ENCODE measurements at regions of chr10 and their contacts with region 1.

Region 1: DNA sequence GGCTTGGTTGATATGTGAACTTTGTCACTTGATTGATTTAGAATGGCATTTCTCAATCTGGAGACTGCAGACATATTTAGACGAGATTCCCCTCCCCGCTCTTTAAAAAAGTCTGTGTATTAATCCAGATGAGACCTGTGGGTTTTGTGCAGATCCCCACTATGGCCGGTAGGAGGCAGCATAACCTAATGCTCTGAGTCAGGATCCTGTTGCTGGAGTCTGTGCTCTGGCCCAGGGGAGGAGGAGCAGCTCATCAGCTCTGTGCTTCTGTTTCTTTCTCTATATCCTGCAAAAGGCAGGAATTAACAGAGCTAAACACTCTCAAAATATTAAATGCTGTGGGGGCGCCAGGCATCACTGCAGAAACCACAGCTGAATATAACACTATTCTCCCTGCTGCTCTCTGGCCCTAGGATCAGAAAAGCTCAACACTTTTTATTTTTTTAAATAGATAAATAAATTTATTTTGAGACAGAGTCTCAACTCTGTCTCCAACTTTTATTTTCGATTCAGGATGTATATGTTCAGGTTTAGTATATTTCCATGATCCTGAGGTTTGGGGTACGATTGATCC is 23.9 kb upstream of the SEPHS1 start:
- DNase-seq: peak; percentile 73
- H3K4me3 ChIP-seq: no peak overlapping the region
- H3K27ac ChIP-seq: no peak overlapping the region
- H3K4me1 ChIP-seq: no peaks in the 10 kb centered on the region
- H3K27me3 ChIP-seq: no peaks in the 10 kb centered on the region
- CTCF ChIP-seq: peak; percentile 88 to 94 (median 92)
- EP300 ChIP-seq: no peak
- POLR2A ChIP-seq: no peak

Region 2: GRCh38 chr10:11483201-11484148 is 1888.5 kb before region 1 on chr10:
- in situ Hi-C with region 1: no loop called
- intact Hi-C with region 1: no loop called
- DNase-seq: no peak
- H3K4me3 ChIP-seq: no peak overlapping the region
- H3K27ac ChIP-seq: peak overlapping the region in 1 of 4 donors; percentile 16
- H3K4me1 ChIP-seq: no peaks in the 10 kb centered on the region
- H3K27me3 ChIP-seq: no peaks in the 10 kb centered on the region
- CTCF ChIP-seq: no peak
- EP300 ChIP-seq: no peak
- POLR2A ChIP-seq: no peak

Region 3: GRCh38 chr10:13422566-13423199 is 50.7 kb after region 1 on chr10:
- in situ Hi-C with region 1: loop called in 1 of 4 experiments (anchors 10 kb)
- intact Hi-C with region 1: no loop called
- DNase-seq: no peak
- H3K4me3 ChIP-seq: no peak overlapping the region
- H3K27ac ChIP-seq: no peak overlapping the region
- H3K4me1 ChIP-seq: no peaks in the 10 kb centered on the region
- H3K27me3 ChIP-seq: no peaks in the 10 kb centered on the region
- CTCF ChIP-seq: no peak
- EP300 ChIP-seq: no peak
- POLR2A ChIP-seq: no peak

Region 4: DNA sequence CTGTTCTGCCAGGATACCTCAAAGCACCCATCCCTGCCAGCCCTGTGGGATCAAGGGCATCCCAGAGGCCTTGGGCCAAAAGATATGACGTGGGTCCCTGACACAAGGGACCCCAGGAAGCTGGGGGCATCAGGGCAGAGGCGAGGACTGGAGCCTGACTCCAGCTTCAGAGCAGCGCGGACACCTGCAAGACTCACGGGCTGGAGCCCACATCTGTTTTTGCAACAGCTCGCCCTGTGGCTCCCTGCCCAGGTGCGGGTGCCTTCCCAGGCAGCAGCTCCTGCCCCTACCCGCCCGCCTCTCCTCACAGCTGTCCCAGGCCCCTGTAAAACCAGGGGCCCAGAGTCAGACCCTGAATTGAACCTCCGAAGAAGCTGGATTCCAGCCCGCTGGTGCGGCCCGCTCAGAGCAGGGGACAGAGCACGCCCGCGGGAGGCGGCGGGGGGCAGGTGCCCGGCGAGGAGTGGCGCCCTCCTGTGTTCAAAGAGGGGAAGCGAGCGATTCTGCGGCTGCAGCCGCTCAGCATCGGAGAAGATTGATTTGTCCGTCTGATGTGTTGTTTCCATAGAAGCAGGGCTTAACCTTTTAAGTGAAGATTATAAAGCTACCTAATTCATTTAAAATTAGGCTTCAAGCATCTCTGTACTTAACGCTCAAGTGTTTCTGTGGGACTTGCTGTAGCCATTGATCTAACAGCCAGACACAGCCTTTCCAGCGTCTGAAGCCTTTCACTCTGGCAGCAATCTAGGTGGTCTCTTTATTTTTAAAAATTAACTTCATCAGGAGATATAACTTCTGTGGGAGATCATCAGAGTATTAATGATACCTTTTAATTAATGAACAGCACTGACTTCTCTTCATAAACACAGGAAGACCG is 68.4 kb after region 1 on chr10:
- in situ Hi-C with region 1: loop called in 2 of 4 experiments (anchors 5 to 10 kb)
- intact Hi-C with region 1: loop called (anchors 5 kb)
- DNase-seq: peak; percentile 71
- H3K4me3 ChIP-seq: peak overlapping the region in 3 of 4 donors; percentile 28 to 48 (median 31)
- H3K27ac ChIP-seq: no peak overlapping the region
- H3K4me1 ChIP-seq: peaks cover 8 to 15% (median 12%) of the 10 kb centered on the region in 4 donors
- H3K27me3 ChIP-seq: peaks cover 35% of the 10 kb centered on the region
- CTCF ChIP-seq: peak; percentile 82 to 92 (median 85)
- EP300 ChIP-seq: no peak
- POLR2A ChIP-seq: no peak

Region 5: GRCh38 chr10:13536674-13537366 is 164.8 kb after region 1 on chr10:
- in situ Hi-C with region 1: loop called in 1 of 4 experiments (anchors 25 kb)
- intact Hi-C with region 1: no loop called
- DNase-seq: peak; percentile 51
- H3K4me3 ChIP-seq: no peak overlapping the region
- H3K27ac ChIP-seq: no peak overlapping the region
- H3K4me1 ChIP-seq: no peaks in the 10 kb centered on the region
- H3K27me3 ChIP-seq: peaks cover 14% of the 10 kb centered on the region
- CTCF ChIP-seq: peak in 4 of 5 experiments; percentile 38 to 53 (median 46)
- EP300 ChIP-seq: no peak
- POLR2A ChIP-seq: no peak

Region 6: DNA sequence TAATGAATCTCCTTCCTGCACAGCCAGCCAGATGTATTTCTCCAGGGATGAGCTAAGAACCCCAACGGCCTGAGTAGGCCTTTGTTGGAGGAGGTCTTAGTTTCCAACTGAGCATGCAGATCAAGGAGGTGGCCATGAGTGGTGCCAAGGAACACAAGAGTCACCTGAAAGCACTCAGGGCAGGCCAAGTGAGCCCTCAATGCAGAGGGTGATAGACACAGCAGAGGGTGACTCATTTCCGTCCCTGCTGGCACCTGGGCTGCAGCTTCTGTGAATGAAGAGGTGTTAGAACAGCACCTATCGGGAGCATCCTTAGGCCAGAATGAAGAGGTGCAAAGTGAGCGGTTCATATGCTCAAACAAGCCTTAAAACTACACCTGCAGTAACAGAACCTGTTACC is 747.0 kb after region 1 on chr10:
- in situ Hi-C with region 1: no loop called
- intact Hi-C with region 1: loop called (anchors 5 kb)
- DNase-seq: no peak
- H3K4me3 ChIP-seq: no peak overlapping the region
- H3K27ac ChIP-seq: no peak overlapping the region
- H3K4me1 ChIP-seq: no peaks in the 10 kb centered on the region
- H3K27me3 ChIP-seq: no peaks in the 10 kb centered on the region
- CTCF ChIP-seq: no peak
- EP300 ChIP-seq: no peak
- POLR2A ChIP-seq: no peak